Activated CD4-positive, alpha-beta memory T cell treated with anti-CD3 and anti-CD28 coated beads for 36 hours (primary cell): ENCODE measurements at regions of chr19 and their contacts with region 1.

Region 1: GRCh38 chr19:4342615-4343369 is 570 bp upstream of the MPND start:
- DNase-seq: peak; percentile 96
- H3K4me3 Mint-ChIP-seq: peak overlapping the region; percentile 89
- H3K27ac Mint-ChIP-seq: peak overlapping the region; percentile 88
- H3K4me1 Mint-ChIP-seq: peaks cover 24% of the 10 kb centered on the region
- H3K27me3 Mint-ChIP-seq: no peaks in the 10 kb centered on the region

Region 2: DNA sequence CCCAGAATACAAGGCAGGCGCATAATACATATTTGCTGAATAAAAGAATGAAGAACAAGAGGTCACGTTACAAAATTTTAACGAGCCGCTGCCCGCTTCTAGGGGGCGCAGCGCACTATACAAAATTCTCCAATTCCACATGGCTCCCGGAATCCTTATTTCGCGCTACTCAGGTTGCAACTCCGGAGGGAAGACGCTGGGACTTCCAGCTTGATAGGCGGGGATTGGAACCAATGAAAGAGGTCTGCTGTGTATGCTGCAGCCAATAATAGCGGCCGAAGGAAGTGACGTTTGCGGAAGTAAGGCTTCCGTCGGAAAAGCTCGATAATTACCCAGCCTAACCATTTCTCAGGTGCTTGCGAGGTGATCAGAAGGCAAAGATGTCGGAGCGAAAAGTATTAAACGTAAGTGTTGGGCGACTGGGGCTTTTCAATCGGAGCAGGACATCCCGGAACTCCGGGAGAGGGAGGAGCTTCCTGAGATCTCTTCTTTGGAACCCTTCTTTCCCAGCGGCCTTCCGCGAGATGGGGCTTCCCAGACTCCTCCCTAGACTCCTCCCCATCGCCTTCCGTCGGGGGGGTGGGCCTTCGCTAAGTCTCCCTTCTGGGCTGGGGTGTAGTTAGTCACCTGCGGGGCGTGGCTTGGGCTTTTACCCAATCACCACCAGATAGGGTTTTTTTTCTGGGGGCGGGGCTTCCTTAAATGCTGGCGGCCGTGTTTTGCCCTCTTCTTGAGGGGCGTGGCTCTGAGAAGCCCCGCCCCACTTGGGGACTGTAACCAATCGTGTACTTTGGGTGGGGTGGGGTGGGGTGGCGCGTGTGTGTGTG is 95.8 kb before region 1 on chr19 and contains the start of gene YJU2:
- CTCF ChIA-PET with region 1: interaction called, 3 read pairs
- POLR2A ChIA-PET with region 1: interaction called, 4 read pairs
- intact Hi-C with region 1: loop called (anchors 1 kb)
- DNase-seq: peak; percentile 99
- H3K4me3 Mint-ChIP-seq: peak within 1 kb of the TSS; percentile 83
- H3K27ac Mint-ChIP-seq: peak within 1 kb of the TSS; percentile 96
- H3K4me1 Mint-ChIP-seq: peaks cover 19% of the 10 kb centered on the region
- H3K27me3 Mint-ChIP-seq: no peaks in the 10 kb centered on the region
- total RNA-seq, gene YJU2: 24.0 to 25.5 TPM

Region 3: DNA sequence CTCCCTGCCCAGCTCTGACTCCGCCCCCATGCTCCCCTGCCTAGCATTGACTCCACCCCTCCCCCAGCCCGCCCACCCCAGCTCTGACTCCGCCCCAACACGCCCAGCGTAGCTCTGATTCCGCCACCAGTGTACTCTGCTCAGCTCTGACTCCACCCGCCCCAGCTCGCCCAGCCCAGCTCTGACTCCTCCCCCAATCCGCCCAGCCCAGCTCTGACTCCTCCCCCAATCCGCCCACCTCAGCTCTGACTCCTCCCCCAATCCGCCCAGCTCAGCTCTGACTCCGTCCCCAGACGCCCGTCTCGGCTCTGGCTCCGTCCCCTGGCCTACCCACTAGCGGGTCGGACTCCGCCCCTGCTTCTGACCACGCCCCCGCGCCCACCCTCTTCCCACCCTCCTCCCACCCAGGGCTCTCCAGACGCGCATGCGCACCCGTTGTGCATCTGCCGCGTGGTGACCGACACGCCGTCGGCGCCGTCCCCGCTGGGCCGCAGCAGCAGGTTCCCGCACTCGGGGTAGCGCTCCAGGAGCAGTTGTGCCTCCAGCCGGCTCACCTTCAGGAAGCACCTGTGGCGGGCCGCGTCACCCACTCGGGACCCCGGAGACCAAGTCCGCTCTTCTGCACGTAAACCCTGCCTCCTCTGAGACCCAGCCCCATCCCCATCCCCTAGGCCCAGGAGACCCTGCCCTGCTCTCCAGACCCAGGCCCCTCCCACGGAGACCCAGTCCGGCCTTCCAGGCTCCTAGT is 14.4 kb before region 1 on chr19:
- CTCF ChIA-PET with region 1: interaction called, 11 read pairs
- POLR2A ChIA-PET with region 1: interaction called, 12 read pairs
- intact Hi-C with region 1: loop called (anchors 1 kb)
- DNase-seq: peak; percentile 98
- H3K4me3 Mint-ChIP-seq: peak overlapping the region; percentile 85
- H3K27ac Mint-ChIP-seq: peak overlapping the region; percentile 81
- H3K4me1 Mint-ChIP-seq: peaks cover 26% of the 10 kb centered on the region
- H3K27me3 Mint-ChIP-seq: peaks cover 3% of the 10 kb centered on the region

Region 4: DNA sequence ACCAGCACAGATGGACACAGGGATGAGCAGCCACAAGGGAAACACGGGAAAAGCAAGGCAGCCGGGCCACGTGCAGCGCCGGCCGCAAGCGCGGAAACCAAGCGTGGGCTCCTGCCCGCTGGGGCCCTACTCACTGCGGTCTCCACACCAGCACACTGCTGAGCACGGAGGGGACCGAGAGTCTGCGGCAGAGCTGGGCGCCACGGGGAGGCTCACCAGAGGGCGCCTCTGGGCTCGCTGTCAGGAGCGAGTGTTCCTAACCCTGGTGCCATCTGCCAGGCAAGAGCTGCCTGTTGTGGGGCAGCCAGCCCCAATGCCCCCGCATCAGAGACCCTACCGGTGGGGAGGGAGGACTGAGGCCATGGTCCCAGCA is 27.1 kb after region 1 on chr19:
- CTCF ChIA-PET with region 1: interaction called, 8 read pairs
- POLR2A ChIA-PET with region 1: no interaction called
- intact Hi-C with region 1: loop called (anchors 1 kb)
- DNase-seq: peak; percentile 88
- H3K4me3 Mint-ChIP-seq: peak overlapping the region; percentile 65
- H3K27ac Mint-ChIP-seq: peak overlapping the region; percentile 95
- H3K4me1 Mint-ChIP-seq: peaks cover 46% of the 10 kb centered on the region
- H3K27me3 Mint-ChIP-seq: no peaks in the 10 kb centered on the region

Region 5: DNA sequence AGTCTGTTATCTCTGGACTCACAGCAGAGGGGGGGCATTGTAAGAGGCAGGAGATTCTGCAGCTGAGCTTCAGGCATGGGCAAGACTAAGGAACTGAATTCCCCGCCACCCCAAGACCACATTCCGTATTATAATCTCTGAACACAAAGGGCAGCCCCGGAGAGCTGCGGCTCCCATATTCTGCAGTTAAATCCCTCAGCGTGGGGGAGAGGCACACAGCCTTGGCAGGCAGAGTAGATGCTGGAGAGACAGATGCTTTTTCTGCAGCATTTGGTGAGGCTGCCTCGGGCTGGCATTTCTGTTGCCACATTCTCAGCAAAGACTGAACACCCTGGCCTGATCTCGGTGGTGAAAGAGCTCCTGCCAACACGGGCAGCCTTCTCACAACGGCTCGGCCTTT is 72.6 kb after region 1 on chr19:
- CTCF ChIA-PET with region 1: no interaction called
- POLR2A ChIA-PET with region 1: no interaction called
- intact Hi-C with region 1: no loop called
- DNase-seq: no peak
- H3K4me3 Mint-ChIP-seq: no peak overlapping the region
- H3K27ac Mint-ChIP-seq: no peak overlapping the region
- H3K4me1 Mint-ChIP-seq: no peaks in the 10 kb centered on the region
- H3K27me3 Mint-ChIP-seq: no peaks in the 10 kb centered on the region